ENCODE measurements at regions of chr9 and their contacts with region 1.

Region 1: DNA sequence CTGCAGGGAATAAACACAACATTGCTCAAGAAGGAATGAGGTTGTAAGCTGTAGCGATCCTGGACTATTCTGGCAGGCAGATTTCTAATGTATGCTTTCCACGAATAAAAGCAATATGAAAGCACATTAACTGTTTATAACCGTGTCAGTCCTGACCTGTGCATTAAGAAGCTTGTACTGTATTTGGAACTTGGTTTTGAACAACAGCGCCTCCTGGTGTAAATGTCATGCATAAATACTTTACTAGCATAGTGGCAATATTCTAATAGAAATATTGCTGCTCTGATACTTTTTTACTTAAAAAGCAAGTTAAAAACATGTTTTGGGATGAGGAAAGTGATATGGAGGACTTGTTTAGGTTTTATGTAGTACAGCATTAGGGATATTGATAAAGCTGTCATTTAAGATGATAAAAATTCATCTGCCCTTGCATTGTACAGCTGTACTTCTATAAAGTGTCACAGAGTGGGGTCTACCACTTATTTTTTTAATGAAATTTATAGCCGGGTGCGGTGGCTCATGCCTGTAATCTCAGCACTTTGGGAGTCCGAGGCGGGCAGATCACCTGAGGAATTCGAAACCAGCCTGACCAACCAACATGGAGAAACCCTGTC is 70.7 kb upstream of the GNE start:
- DNase-seq: peak; percentile 76
- ATAC-seq: peak; percentile 31
- H3K4me3 ChIP-seq: no peak overlapping the region
- H3K4me3 Mint-ChIP-seq: no peak overlapping the region
- H3K27ac ChIP-seq: no peak overlapping the region
- H3K27ac Mint-ChIP-seq: no peak overlapping the region
- H3K4me1 ChIP-seq: no peaks in the 10 kb centered on the region
- H3K4me1 Mint-ChIP-seq: peaks cover 2% of the 10 kb centered on the region
- H3K27me3 ChIP-seq: no peaks in the 10 kb centered on the region
- H3K27me3 Mint-ChIP-seq: no peaks in the 10 kb centered on the region
- CTCF ChIP-seq: peak; percentile 85

Region 2: GRCh38 chr9:35954942-35955546 is 373.9 kb before region 1 on chr9:
- CTCF ChIA-PET with region 1: interaction called, 4 read pairs
- POLR2A ChIA-PET with region 1: no interaction called
- intact Hi-C with region 1: loop called (anchors 2 kb)
- DNase-seq: peak; percentile 78
- ATAC-seq: peak; percentile 62
- H3K4me3 ChIP-seq: no peak overlapping the region
- H3K4me3 Mint-ChIP-seq: no peak overlapping the region
- H3K27ac ChIP-seq: no peak overlapping the region
- H3K27ac Mint-ChIP-seq: no peak overlapping the region
- H3K4me1 ChIP-seq: no peaks in the 10 kb centered on the region
- H3K4me1 Mint-ChIP-seq: no peaks in the 10 kb centered on the region
- H3K27me3 ChIP-seq: peaks cover 0 to 12% (median 6%) of the 10 kb centered on the region in 4 experiments
- H3K27me3 Mint-ChIP-seq: peaks cover 35% of the 10 kb centered on the region
- CTCF ChIP-seq: peak; percentile 96

Region 3: GRCh38 chr9:36250079-36250478 is 78.8 kb before region 1 on chr9:
- CTCF ChIA-PET with region 1: interaction called, 115 read pairs
- POLR2A ChIA-PET with region 1: interaction called, 4 read pairs
- intact Hi-C with region 1: no loop called
- DNase-seq: no peak
- ATAC-seq: no peak
- H3K4me3 ChIP-seq: no peak overlapping the region
- H3K4me3 Mint-ChIP-seq: no peak overlapping the region
- H3K27ac ChIP-seq: no peak overlapping the region
- H3K27ac Mint-ChIP-seq: no peak overlapping the region
- H3K4me1 ChIP-seq: peaks cover 6 to 9% of the 10 kb centered on the region in 2 donors
- H3K4me1 Mint-ChIP-seq: peaks cover 25% of the 10 kb centered on the region
- H3K27me3 ChIP-seq: no peaks in the 10 kb centered on the region
- H3K27me3 Mint-ChIP-seq: no peaks in the 10 kb centered on the region
- CTCF ChIP-seq: no peak

Region 4: DNA sequence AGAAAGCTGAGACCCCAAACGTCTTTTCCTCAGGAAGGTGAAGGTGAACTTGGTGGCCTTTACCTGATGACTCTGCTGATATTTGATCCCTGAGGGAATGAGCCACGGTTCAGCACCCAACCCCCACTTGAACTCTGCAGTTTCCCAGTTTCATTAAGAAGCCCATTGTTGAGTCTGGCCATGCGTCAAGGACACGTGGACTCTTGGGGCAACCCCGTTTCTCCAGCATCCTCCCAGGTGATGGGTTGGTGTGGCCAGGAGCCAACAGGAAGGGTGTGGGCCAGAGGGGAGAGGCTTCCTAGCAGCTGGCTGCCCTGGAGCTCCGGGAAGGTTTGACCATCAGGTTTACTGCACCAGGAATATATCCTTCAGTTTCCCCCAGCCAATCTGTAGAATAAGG is 11.1 kb before region 1 on chr9:
- CTCF ChIA-PET with region 1: interaction called, 12 read pairs
- POLR2A ChIA-PET with region 1: no interaction called
- intact Hi-C with region 1: no loop called
- DNase-seq: no peak
- ATAC-seq: no peak
- H3K4me3 ChIP-seq: no peak overlapping the region
- H3K4me3 Mint-ChIP-seq: no peak overlapping the region
- H3K27ac ChIP-seq: no peak overlapping the region
- H3K27ac Mint-ChIP-seq: no peak overlapping the region
- H3K4me1 ChIP-seq: no peaks in the 10 kb centered on the region
- H3K4me1 Mint-ChIP-seq: no peaks in the 10 kb centered on the region
- H3K27me3 ChIP-seq: peaks cover 0 to 10% (median 0%) of the 10 kb centered on the region in 4 experiments
- H3K27me3 Mint-ChIP-seq: peaks cover 3% of the 10 kb centered on the region
- CTCF ChIP-seq: no peak

Region 5: DNA sequence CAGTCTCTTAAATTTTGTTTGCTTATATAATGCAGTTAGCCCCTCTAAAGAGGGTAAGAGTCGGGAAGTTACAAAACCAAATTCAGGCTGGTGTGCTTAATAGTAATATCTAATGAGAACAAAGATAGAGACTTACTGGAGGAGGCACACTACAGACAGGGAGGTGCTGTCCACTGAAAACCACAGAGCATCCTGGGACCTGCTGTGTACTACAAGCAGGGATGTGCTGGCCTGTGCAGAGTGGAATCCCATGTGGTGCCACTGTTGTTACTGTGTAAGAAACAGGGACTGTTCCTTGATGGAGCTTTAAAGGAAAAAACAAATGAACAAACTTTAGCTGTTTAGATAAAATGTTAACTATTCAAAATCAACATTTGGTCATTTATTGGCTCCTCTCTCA is 28.7 kb after region 1 on chr9:
- CTCF ChIA-PET with region 1: no interaction called
- POLR2A ChIA-PET with region 1: no interaction called
- intact Hi-C with region 1: no loop called
- DNase-seq: no peak
- ATAC-seq: no peak
- H3K4me3 ChIP-seq: no peak overlapping the region
- H3K4me3 Mint-ChIP-seq: no peak overlapping the region
- H3K27ac ChIP-seq: no peak overlapping the region
- H3K27ac Mint-ChIP-seq: no peak overlapping the region
- H3K4me1 ChIP-seq: no peaks in the 10 kb centered on the region
- H3K4me1 Mint-ChIP-seq: no peaks in the 10 kb centered on the region
- H3K27me3 ChIP-seq: no peaks in the 10 kb centered on the region
- H3K27me3 Mint-ChIP-seq: no peaks in the 10 kb centered on the region
- CTCF ChIP-seq: no peak

Measured in B cell (primary cell).